ENCODE measurements at regions of chr4 and their contacts with region 1.

Region 1: DNA sequence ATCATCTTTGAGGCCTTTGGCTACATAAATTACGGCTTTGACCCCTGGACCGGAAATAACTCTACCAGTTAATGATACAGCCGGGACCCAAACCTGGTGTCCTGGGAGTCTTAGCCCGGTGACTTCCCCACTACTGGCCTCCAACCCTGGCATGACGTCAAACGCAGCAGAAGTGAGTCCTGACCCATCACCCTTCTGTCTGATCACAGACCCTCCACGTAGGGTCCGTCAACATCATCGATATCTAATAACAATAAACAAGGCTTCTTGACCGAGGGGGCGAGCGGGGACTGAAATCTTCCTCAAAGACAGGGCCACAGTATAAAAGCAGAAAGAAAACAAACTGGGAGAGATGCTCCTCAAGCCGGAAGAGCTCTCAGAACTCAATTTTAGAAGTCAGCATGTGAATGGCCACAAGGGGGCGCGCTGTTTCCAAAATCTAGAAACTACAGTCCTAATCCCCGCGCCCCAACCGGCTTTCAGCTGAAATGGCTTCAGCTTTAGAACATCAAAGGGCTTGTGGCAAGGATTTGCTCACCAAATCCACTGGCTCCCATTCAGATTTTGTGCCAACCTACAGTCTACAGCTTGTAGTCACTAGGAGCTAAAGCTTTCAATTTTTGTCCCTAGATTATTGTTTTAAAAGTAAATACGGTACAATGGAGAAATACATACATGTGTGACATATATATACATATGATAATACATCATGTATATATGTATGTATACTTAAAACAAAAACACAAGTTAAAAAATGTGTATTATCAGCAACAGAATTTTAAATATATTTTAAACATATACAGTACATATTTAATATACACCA is 46.4 kb upstream of the ENPP6 start:
- DNase-seq: peak; percentile 72
- CTCF ChIP-seq: peak; percentile 68

Region 2: DNA sequence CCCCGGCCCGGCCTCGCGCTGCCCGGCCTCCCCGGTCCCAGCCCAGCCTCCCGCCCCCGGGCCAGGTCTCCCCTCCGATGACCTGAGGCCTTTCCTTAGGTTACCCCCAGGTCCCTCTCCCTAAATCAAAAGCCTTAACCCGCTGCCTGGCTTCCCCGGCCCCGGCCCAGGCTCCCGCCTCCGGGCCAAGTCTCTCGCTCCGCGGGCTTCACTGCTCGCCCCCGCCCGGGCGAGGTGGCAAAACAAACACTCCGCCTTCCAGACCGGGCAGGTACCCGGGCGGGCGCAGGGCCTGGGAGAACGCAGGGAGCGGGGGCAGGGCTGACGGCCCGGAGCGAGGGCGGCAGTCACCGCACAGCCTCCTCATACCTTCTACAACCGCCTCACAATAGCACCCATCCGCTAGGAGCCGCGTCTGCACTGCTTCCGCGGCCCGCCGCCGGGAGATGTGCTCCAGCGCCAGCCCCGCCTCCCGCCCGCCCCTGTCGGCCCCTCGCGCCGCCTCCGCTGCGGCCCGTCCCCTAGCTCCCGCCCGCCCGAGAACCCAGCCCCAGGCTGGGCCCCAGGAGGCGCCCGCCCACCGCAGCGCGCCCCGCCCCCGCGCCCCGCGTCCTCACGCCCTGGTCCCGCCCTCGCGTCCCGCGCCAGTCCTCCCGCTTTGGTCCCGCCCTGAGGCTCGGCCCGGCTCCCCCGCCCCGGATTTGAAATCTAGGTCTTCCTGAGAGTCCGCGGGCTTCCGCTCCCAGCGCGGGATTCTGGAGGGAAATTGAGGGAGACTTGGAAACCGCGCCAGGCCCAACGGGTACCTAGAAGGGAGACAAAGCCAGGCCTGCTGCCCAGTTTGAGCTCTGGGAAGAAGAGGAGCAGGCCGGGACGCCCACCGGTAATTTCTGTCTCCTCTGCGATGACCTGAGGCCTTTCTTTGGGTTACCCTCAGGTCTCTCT is 385.2 kb after region 1 on chr4 and contains the starts of genes CASP3 and PRIMPOL:
- in situ Hi-C with region 1: loop called (anchors 10 kb)
- DNase-seq: peak; percentile 94
- CTCF ChIP-seq: peak; percentile 45

Region 3: DNA sequence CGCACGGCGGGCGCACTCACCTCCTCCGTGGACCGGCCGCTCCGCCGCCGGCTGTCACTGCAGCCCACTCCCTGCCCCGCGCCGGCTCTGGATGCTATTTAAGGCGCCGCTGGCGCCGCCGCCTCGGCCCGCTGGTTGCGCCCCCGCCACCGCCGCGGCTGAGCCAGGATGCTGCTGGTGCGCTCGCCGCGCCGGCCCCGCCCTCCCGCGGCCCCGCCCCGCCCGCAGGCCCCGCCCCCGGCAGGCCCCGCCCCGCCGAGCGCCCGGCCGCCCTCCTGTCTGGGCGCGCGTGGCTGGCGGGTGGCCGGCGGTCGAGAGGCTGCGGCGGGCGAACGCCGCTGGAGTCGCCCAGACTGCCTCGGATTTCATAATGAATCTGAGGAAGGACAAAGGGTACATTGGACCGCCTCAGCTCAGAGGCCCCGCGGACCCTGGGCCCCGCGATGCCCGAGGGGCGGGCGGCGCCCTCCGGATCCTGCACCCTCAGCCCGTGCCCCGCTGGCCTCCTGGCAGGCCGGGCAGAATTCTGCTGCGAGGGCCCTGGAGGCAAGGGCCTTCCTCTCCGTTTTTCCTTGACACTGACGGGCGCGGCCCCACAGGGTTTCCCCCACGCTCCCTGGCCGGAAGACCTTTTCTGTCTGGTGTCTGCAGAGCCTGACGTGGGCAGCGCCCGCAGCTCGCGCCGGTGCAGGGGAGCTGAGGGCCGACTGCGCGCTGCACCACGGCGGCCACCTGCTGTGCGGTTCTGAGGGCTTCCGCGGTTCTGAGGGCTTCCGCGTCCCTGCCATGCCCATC is 562.0 kb after region 1 on chr4 and contains the start of gene ACSL1:
- in situ Hi-C with region 1: no loop called
- DNase-seq: peak; percentile 97
- CTCF ChIP-seq: peak; percentile 3

Measured in GM13976 (cell line).